IMR-90 (cell line): ENCODE measurements at regions of chr20 and their contacts with region 1.

Region 1: DNA sequence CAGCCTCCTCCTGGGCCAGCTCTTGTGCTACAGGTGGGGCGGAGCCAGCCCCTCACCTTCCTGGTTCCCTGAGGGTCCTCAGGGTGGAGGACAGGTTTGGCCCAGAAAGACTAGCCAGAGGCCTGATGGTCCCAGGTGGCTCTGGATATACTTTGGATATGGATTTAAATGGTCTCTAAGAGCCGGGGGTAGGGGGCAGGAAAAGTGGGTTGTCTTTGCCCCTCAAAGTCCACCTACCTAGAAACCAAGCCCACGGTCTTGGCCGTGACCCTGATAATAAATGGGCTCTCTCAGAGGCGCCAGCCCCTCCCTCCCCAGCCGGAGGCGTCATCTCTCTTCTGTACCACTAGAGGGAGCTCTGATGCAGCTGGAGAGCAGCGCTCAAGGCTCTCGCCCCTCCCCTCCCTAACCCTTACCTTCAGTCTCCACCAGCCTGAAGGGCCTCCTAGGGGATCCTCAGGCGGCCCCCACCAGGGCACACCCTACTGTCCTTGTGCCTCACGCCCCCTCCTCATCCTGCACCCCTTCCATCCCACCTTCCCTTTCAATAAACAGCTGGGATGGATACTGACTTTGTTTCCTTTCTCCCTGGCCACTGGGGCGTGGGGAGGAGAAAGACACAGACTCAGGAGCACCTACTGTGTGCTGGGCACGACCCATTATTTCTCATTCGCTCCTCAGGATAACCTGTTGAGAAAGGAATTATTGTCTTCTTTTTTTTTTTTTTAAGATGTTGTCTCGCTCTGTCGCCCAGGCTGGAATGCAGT is 7.6 kb downstream of the NRSN2 start:
- DNase-seq: peak; percentile 67
- ATAC-seq: peak; percentile 97
- H3K4me3 ChIP-seq: no peak overlapping the region
- H3K27ac ChIP-seq: no peak overlapping the region
- H3K4me1 ChIP-seq: peaks cover 4% of the 10 kb centered on the region; the same call in 1 of the 2 replicates
- H3K27me3 ChIP-seq: no peaks in the 10 kb centered on the region
- CTCF ChIP-seq: peak; percentile 97
- POLR2A ChIP-seq: peak; percentile 56; the same call in 1 of the 2 replicates
- RAD21 ChIP-seq: peak; percentile 99

Region 2: GRCh38 chr20:420641-421574 is 66.4 kb after region 1 on chr20:
- CTCF ChIA-PET with region 1: no interaction called
- POLR2A ChIA-PET with region 1: no interaction called
- dilution Hi-C with region 1: no loop called
- in situ Hi-C with region 1: no loop called
- intact Hi-C with region 1: no loop called
- DNase-seq: no peak
- ATAC-seq: 0 out of 2 replicates have a peak, but pooled peaks have one; percentile 32
- H3K4me3 ChIP-seq: no peak overlapping the region
- H3K27ac ChIP-seq: no peak overlapping the region
- H3K4me1 ChIP-seq: no peaks in the 10 kb centered on the region
- H3K27me3 ChIP-seq: no peaks in the 10 kb centered on the region
- CTCF ChIP-seq: no peak
- POLR2A ChIP-seq: no peak
- RAD21 ChIP-seq: no peak

Region 3: GRCh38 chr20:431012-431904 is 76.8 kb after region 1 on chr20:
- CTCF ChIA-PET with region 1: no interaction called
- POLR2A ChIA-PET with region 1: interaction called, 7 read pairs
- dilution Hi-C with region 1: no loop called
- in situ Hi-C with region 1: loop called (anchors 5 kb)
- intact Hi-C with region 1: loop called (anchors 1 kb)
- DNase-seq: peak; percentile 68
- ATAC-seq: peak; percentile 74
- H3K4me3 ChIP-seq: no peak overlapping the region
- H3K27ac ChIP-seq: no peak overlapping the region
- H3K4me1 ChIP-seq: no peaks in the 10 kb centered on the region
- H3K27me3 ChIP-seq: no peaks in the 10 kb centered on the region
- CTCF ChIP-seq: peak; percentile 58
- POLR2A ChIP-seq: no peak
- RAD21 ChIP-seq: peak; percentile 56

Region 4: GRCh38 chr20:444862-445426 is 90.5 kb after region 1 on chr20:
- CTCF ChIA-PET with region 1: no interaction called
- POLR2A ChIA-PET with region 1: no interaction called
- dilution Hi-C with region 1: no loop called
- in situ Hi-C with region 1: no loop called
- intact Hi-C with region 1: no loop called
- DNase-seq: peak; percentile 60
- ATAC-seq: peak; percentile 72
- H3K4me3 ChIP-seq: no peak overlapping the region
- H3K27ac ChIP-seq: peak overlapping the region; percentile 10; the same call in 1 of the 2 replicates
- H3K4me1 ChIP-seq: peaks cover 5% of the 10 kb centered on the region
- H3K27me3 ChIP-seq: no peaks in the 10 kb centered on the region
- CTCF ChIP-seq: no peak
- POLR2A ChIP-seq: no peak
- RAD21 ChIP-seq: no peak

Region 5: DNA sequence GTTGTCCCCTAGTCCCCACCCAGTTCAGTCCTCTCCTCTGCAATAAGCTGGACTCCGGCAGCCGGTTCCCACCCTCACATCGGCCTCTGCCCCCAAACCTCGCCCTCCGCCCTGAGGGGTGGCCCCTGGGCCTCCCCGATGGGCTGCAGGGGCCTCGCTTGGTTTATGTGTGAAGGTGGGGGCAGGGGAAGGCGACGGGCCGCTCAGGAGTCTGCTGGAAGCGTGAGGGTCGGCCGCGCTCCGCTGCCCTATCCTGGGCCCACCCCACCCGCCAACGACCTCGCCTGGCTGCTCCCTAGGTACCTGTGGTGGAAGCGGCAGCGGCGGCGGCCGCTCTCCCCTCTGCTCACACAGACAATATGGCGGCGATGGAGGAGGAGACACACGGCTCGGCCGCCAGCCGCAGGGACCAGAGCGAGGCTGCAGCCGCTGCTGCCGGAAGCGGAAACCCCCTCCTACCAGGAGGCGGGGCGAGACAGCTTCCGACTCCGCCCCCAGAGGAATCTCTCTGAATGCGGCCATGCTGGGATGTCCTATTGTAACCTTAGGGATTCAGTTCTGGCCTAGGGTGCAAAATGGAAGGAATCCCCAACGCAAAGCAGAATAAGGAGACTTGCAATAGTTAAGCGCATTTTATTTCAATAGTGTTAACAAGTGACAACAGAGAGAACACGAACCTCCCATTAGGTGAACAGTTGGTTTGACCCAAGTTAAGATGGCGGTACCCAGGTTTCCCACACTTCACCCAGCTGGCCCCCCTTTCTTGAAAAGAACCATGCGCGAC is 189.1 kb after region 1 on chr20 and contains the start of gene CSNK2A1:
- CTCF ChIA-PET with region 1: no interaction called
- POLR2A ChIA-PET with region 1: no interaction called
- dilution Hi-C with region 1: no loop called
- in situ Hi-C with region 1: no loop called
- intact Hi-C with region 1: loop called (anchors 5 kb)
- DNase-seq: peak; percentile 94
- ATAC-seq: peak; percentile 94
- H3K4me3 ChIP-seq: peak within 1 kb of the TSS; percentile 92
- H3K27ac ChIP-seq: peak within 1 kb of the TSS; percentile 91
- H3K4me1 ChIP-seq: no peaks in the 10 kb centered on the region; the same call in 1 of the 2 replicates
- H3K27me3 ChIP-seq: peaks cover 6% of the 10 kb centered on the region
- CTCF ChIP-seq: no peak
- POLR2A ChIP-seq: peak; percentile 91
- RAD21 ChIP-seq: no peak
- total RNA-seq, gene CSNK2A1: 151 and 193 TPM in 2 replicates

Region 6: DNA sequence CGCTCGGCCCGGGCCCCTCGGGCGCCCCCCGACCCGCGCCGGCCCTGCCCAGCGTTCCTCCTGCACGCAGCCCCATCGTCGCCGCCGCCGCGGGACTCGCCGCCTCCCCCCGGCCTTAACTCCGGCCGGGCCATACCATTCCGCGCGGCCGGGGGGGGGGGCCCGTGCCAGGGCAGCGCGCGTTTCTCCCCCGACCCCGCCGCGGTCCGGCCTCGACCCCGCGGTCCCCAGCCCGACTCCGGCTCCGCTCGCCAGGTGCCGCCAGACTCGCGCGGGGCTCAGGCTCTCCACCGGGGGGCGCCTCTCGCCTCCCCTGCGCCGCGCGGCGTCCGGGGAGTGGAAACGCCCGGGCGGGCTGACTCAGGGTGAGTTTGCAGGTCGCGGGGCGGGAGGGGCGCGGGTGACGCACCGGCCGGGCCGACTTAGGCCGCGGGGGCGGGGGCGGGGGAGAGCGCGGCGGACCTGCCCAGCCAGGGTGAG is 298.7 kb after region 1 on chr20 and contains the start of gene SRXN1:
- CTCF ChIA-PET with region 1: no interaction called
- POLR2A ChIA-PET with region 1: no interaction called
- dilution Hi-C with region 1: no loop called
- in situ Hi-C with region 1: loop called (anchors 10 kb)
- intact Hi-C with region 1: no loop called
- DNase-seq: peak; percentile 93
- ATAC-seq: peak; percentile 94
- H3K4me3 ChIP-seq: peak within 1 kb of the TSS; percentile 79
- H3K27ac ChIP-seq: peak within 1 kb of the TSS; percentile 90
- H3K4me1 ChIP-seq: peaks cover 12% of the 10 kb centered on the region
- H3K27me3 ChIP-seq: peaks cover 3% of the 10 kb centered on the region; the same call in 1 of the 2 replicates
- CTCF ChIP-seq: peak; percentile 76
- POLR2A ChIP-seq: peak; percentile 89
- RAD21 ChIP-seq: peak; percentile 51
- total RNA-seq, gene SRXN1: 63.0 and 71.2 TPM in 2 replicates

Region 7: DNA sequence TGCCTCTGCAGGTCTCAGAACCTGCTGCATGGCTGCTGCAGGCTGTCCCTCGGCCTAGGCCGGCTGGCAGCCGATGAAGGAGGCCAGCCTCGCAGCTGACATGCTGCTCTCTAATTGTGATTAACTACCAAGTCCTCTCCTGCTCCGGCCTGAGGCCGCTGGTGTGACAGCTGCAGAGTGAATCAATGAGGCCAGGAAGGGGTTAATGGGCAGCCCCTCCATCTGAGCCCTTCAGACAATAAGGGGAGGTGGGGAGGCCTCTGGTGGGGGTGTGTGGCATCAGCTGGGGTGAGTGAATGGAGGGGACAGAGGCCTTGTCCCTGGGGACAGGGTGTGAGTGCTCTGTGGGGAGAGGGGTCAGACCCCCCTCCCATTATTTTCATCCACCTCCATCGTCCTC is 379.4 kb after region 1 on chr20:
- CTCF ChIA-PET with region 1: no interaction called
- POLR2A ChIA-PET with region 1: no interaction called
- dilution Hi-C with region 1: no loop called
- in situ Hi-C with region 1: loop called (anchors 10 kb)
- intact Hi-C with region 1: loop called (anchors 2 kb)
- DNase-seq: no peak
- ATAC-seq: no peak
- H3K4me3 ChIP-seq: no peak overlapping the region
- H3K27ac ChIP-seq: no peak overlapping the region
- H3K4me1 ChIP-seq: no peaks in the 10 kb centered on the region
- H3K27me3 ChIP-seq: peaks cover 17% of the 10 kb centered on the region
- CTCF ChIP-seq: no peak
- POLR2A ChIP-seq: no peak
- RAD21 ChIP-seq: no peak